Stomach (tissue), 19 donors: ENCODE measurements at regions of chr10 and their contacts with region 1.

Region 1: GRCh38 chr10:88835096-88835909 is 16.3 kb downstream of the ANKRD22 start:
- DNase-seq: peak; percentile 87 to 96
- H3K4me3 ChIP-seq: no peak overlapping the region
- H3K27ac ChIP-seq: peak overlapping the region in 2 of 5 donors; percentile 1 to 29
- H3K4me1 ChIP-seq: peaks cover 7 to 75% (median 32%) of the 10 kb centered on the region in 4 donors
- H3K27me3 ChIP-seq: no peaks in the 10 kb centered on the region
- CTCF ChIP-seq: peak in 5 of 7 experiments; percentile 78 to 92 (median 85)
- EP300 ChIP-seq: no peak
- POLR2A ChIP-seq: no peak

Region 2: GRCh38 chr10:88450201-88450600 is 385.1 kb before region 1 on chr10:
- intact Hi-C with region 1: no loop called
- DNase-seq: no peak
- H3K4me3 ChIP-seq: no peak overlapping the region
- H3K27ac ChIP-seq: no peak overlapping the region
- H3K4me1 ChIP-seq: peaks cover 0 to 5% (median 0%) of the 10 kb centered on the region in 4 donors
- H3K27me3 ChIP-seq: no peaks in the 10 kb centered on the region
- CTCF ChIP-seq: no peak
- EP300 ChIP-seq: no peak
- POLR2A ChIP-seq: no peak

Region 3: DNA sequence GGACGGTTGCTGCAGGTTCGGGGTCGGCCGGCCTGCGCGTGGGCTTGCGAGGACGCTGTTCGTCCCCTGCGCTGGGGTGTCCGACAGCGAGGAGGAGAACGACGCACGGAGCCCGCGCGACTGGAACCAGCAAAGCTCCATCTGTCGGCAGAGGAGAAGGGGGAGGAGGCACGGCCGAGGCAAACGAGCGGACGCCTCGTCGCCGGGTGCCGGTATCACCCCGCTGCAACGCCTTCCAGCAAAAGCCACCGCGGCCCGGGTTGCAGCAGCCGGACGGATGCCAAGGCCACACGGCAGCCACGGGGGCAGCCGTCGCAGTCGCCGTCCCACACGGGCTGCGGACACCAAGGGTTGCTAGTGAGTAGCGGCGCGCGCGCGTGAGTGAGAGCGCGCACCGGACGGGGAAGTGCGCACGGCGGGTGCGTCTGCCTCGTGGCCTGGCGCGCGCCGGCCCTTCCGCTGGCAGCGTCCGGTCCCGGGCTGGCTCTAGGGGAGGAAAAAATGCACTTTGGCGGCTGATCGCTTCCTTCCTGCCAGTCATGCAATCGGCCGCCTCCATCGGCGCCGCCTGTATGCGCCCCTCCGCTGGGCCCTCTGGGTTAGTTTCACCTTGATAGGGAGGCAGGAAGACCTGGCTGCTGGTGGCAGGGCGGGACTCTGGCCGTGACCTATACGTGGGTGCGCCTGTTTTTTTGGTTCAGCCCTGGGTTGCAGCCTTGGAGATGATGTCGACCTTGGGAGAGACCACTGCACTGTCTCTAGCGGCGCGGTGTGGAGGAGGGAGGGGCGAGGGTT is 45.2 kb after region 1 on chr10:
- intact Hi-C with region 1: loop called (anchors 10 kb)
- DNase-seq: peak; percentile 86 to 94
- H3K4me3 ChIP-seq: peak overlapping the region; percentile 62 to 95 (median 71)
- H3K27ac ChIP-seq: peak overlapping the region; percentile 93 to 98 (median 95)
- H3K4me1 ChIP-seq: peaks cover 13 to 53% (median 26%) of the 10 kb centered on the region in 4 donors
- H3K27me3 ChIP-seq: no peaks in the 10 kb centered on the region
- CTCF ChIP-seq: peak in 1 of 7 experiments; percentile 14
- EP300 ChIP-seq: no peak
- POLR2A ChIP-seq: peak in 1 of 4 donors; percentile 24

Region 4: DNA sequence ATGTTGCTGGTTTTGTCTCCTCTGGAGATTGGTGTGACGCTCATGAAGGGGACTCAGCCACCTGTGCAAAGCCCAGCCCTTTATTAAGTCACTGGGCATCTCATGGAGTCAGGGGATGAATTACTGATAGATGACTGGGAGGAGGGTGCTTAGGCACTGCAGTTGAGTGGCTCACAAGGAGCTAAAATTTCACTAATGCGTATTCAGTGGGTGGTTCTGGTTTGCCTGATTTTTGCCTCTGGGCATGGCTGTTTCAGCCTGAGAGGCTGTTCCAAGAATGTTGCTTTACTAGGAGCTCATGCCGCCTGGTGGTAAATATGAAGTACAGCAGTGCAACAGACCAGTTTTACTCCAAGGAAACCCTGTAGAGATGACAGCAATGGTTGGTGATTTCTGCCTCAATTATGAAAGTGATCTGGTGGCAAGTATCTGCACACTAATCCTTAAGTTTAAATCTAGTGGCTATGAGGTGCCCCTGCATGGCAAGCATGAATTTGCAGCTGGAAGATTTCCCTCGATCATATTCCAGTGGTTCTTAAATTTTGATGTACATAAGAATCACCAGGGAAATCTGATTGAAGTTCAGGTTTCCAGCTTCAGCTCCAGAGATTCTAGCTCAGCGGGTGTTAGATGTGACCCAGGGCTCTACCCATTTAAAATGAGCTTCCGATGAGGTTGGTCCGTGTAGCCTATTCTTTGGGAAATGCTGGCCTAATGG is 97.4 kb after region 1 on chr10:
- intact Hi-C with region 1: loop called (anchors 5 kb)
- DNase-seq: peak; percentile 32 to 89
- H3K4me3 ChIP-seq: no peak overlapping the region
- H3K27ac ChIP-seq: peak overlapping the region in 4 of 5 donors; percentile 47 to 70 (median 54)
- H3K4me1 ChIP-seq: peaks cover 13 to 27% (median 16%) of the 10 kb centered on the region in 4 donors
- H3K27me3 ChIP-seq: no peaks in the 10 kb centered on the region
- CTCF ChIP-seq: peak in 5 of 7 experiments; percentile 87 to 94 (median 92)
- EP300 ChIP-seq: no peak
- POLR2A ChIP-seq: no peak